ENCODE measurements at regions of chr17 and their contacts with region 1.

Region 1: DNA sequence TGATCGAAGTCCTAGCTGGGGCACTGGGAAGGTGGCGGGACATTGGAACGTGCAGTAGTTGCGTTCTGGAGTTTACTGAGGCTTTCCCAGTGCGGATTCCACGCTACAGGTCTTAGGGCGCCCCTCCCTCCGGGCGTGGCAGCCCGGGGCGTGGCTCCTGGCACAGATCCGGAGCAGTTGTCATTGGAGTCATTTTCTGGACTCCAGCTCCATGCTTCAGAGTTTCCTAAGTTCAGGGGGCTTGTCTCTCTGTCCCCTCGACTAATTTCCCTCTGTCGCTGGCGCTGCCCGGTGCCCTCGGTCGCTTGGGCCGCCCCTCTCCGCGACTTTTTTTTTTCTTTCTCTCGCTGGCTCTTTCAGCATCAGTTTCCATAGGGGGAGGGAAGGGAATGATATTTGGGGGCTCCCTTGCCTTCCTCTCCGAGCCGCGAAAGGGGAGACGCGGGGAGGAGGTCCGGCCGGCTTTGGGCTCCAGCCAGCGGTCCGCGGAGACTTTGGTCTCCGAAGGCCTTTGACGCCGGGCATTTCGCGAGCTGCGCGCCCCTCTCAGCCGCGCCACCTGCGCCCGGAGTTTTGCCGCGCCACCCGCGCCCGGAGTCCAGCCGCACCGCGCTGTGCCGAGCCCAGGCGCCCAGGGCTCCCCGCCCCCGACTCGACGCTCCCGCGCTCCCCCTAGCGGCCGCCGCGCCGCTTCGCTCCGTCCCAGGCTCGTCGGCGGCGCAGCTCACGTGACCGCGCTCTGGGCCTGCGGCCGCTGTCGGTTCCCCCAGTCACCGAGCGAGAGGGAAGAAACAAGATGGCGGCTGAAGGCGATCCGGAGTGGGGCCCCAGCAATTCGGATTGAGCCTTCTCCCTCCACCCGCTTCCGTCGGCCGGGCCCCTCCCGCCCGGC is at the start of gene BPTF:
- DNase-seq: peak; percentile 46 to 93
- H3K4me3 ChIP-seq: peak within 1 kb of the TSS; percentile 88 to 99
- H3K27ac ChIP-seq: peak within 1 kb of the TSS; percentile 85 to 99
- H3K4me1 ChIP-seq: peaks cover 0 to 15% of the 10 kb centered on the region in 2 donors
- H3K27me3 ChIP-seq: no peaks in the 10 kb centered on the region
- CTCF ChIP-seq: peak; percentile 72 to 98 (median 86)
- total RNA-seq, gene BPTF: 67.4 TPM

Region 2: DNA sequence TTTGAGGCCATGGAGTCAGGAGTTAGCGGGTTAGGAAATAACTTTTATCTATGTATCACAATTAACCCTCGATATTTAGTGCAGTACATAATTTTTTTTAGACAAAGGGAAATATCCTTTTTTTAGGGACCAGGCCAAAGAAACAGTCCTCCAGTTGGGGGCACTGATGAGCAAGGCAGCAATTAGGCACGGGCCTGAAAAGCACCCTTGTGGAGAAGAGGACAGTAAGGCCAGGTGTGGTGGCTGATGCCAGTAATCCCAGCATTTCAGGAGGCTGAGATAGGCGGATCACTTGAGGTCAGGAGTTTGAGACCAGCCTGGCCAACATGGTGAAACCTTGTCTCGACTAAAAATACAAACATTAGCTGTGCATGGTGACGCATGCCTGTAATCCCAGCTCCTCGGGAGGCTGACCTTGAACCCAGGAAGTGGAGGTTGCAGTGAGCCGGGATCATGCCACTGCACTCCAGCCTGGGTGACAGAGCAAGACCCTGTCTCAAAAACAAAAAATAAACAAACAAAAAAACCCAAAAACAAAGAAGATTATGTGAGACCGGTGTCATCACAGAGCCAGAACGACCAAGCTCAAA is 265.5 kb before region 1 on chr17:
- intact Hi-C with region 1: no loop called
- DNase-seq: no peak
- H3K4me3 ChIP-seq: no peak overlapping the region
- H3K27ac ChIP-seq: no peak overlapping the region
- H3K4me1 ChIP-seq: no peaks in the 10 kb centered on the region
- H3K27me3 ChIP-seq: no peaks in the 10 kb centered on the region
- CTCF ChIP-seq: no peak

Region 3: DNA sequence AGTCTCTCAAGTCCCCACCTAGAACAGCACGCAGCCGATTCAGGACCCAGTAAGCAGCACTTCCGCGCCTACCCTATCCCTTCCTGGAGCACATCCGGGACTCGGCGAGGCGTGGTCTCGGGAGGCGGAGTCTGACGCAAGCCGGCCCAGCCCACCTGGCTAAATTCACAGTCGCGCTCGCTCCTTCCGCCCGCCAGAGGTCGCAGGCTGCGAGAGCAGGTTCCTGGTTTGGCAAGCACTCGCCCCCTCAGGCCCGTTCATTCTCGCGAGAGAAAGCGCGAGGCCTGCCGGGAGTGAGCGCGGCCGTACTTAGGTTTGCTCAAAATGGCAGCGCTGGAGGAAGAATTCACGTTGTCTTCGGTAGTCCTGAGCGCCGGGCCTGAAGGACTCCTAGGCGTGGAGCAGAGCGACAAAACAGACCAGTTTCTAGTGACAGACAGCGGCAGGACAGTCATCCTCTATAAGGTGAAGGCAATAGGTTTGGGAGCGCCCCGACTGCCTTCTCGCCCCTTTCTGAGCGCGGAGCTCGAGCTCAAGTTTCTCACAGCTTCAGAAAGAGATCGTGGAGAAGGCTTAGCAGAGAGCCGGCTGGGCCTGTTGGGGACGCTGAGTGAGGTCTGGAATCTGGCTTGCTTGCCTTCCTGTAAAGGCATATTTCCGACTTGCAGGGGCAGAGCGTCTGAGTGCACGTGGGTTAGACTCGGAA is 107.2 kb before region 1 on chr17 and contains the start of gene NOL11:
- intact Hi-C with region 1: loop called (anchors 1 kb)
- DNase-seq: peak; percentile 95 to 100
- H3K4me3 ChIP-seq: peak within 1 kb of the TSS; percentile 91 to 97
- H3K27ac ChIP-seq: peak within 1 kb of the TSS; percentile 89 to 92
- H3K4me1 ChIP-seq: peaks cover 5 to 11% of the 10 kb centered on the region in 2 donors
- H3K27me3 ChIP-seq: no peaks in the 10 kb centered on the region
- CTCF ChIP-seq: peak; percentile 85 to 92 (median 87)
- total RNA-seq, gene NOL11: 22.0 TPM

Region 4: GRCh38 chr17:67800495-67800928 is 24.5 kb before region 1 on chr17:
- intact Hi-C with region 1: loop called (anchors 2 kb)
- DNase-seq: peak; percentile 16 to 80
- H3K4me3 ChIP-seq: no peak overlapping the region
- H3K27ac ChIP-seq: no peak overlapping the region
- H3K4me1 ChIP-seq: no peaks in the 10 kb centered on the region
- H3K27me3 ChIP-seq: no peaks in the 10 kb centered on the region
- CTCF ChIP-seq: peak; percentile 17 to 58 (median 38)

Region 5: GRCh38 chr17:68011199-68011665 is 186.3 kb after region 1 on chr17:
- intact Hi-C with region 1: no loop called
- DNase-seq: no peak
- H3K4me3 ChIP-seq: no peak overlapping the region
- H3K27ac ChIP-seq: no peak overlapping the region
- H3K4me1 ChIP-seq: no peaks in the 10 kb centered on the region
- H3K27me3 ChIP-seq: no peaks in the 10 kb centered on the region
- CTCF ChIP-seq: peak; percentile 26 to 53 (median 35)